ENCODE measurements at regions of chr5 and their contacts with region 1.

Region 1: DNA sequence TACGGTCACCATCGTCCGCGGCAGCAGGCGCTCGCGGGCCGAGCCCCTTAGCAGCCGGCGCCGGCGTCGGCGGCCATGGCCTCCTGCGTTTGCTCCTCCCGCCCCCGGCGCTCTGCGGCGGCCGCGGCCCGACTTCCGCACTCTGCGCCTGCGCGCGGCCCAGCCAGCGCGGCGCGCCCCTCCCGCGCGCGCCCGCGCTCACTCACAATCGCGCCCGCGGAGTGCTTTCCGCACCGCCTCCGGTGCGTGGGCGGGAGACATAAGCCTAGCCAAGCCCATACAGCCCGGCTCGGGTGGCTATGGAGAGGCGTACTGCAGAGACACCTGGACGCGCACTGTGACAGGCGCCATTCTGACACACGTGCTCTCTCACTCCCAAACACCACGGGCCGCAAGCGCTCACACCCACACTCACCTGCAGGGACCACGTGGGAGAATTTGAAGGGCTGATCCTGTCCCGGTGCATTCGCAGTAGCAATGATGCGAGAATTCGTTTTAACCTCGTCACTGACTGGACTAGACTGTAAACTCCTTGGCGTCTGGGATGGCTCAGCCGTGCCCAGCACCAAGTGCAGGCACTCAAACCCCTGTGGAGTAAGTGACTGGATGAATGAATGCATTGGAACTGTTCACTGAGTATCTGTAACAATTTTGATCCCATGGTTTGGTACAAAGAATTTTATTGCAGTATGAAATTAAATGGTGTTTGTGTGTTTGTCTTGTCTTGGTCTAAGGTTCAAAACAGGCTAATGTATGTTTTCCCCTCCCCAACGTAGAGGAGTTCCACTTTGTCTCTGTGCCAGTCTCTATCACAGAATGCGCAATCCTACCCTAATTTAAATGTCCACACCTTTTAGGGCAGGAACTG is at the start of gene RNF145:
- DNase-seq: peak; percentile 86
- H3K4me3 Mint-ChIP-seq: peak within 1 kb of the TSS; percentile 91
- H3K27ac Mint-ChIP-seq: peak within 1 kb of the TSS; percentile 97
- H3K4me1 Mint-ChIP-seq: peaks cover 50% of the 10 kb centered on the region
- H3K27me3 Mint-ChIP-seq: peaks cover 7% of the 10 kb centered on the region
- total RNA-seq, gene RNF145: 113 and 124 TPM in 2 replicates

Region 2: GRCh38 chr5:159163027-159163700 is 46.5 kb before region 1 on chr5:
- intact Hi-C with region 1: loop called (anchors 2 kb)
- DNase-seq: no peak
- H3K4me3 Mint-ChIP-seq: no peak overlapping the region
- H3K27ac Mint-ChIP-seq: peak overlapping the region; percentile 42
- H3K4me1 Mint-ChIP-seq: peaks cover 38% of the 10 kb centered on the region
- H3K27me3 Mint-ChIP-seq: no peaks in the 10 kb centered on the region

Region 3: DNA sequence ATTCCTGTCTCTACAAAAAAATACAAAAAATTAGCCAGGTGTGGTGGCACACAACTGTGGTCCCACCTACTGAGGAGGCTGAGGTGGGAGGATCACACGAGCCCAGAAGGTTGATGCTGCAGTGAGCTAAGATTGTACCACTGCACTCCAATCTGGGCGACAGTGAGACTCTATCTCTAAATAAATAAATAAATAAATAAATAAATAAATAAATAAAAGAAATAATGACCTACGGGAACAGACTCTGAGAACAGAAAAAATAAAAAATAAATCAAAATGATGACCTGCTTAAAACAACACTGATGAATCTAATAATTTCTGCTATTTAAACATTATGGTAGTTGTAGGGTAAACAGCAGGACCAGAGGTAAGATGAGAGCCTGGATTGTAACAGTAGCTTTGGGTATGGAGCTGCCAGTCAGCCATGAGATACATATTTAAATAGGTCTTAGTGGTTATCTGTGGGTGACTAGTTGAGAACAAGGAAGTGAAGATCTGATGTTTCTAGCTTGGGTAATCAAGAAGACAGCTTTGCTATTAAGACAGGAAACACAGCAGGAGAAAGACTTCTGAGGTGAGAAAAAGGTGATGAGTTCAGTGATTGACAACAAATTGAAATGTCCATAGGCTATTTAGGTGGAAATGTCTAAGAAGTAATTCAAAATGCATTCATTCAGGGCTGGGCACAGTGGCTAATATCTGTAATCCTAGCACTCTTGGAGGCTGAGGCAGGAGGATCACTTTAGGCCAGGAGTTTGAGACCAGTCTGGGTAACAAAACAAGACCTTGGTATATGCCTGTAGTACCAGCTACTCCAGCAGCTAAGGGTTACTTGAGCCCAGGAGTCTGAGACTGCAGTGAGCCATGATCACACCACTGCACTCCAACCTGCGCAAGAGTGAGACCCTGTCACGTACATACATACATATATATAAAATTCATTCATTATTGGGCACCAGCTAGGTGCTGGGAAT is 11.3 kb before region 1 on chr5:
- intact Hi-C with region 1: loop called (anchors 1 kb)
- DNase-seq: no peak
- H3K4me3 Mint-ChIP-seq: peak overlapping the region; percentile 24
- H3K27ac Mint-ChIP-seq: peak overlapping the region; percentile 78
- H3K4me1 Mint-ChIP-seq: peaks cover 54% of the 10 kb centered on the region
- H3K27me3 Mint-ChIP-seq: no peaks in the 10 kb centered on the region

Region 4: GRCh38 chr5:159262859-159263567 is 53.3 kb after region 1 on chr5 and contains the start of gene UBLCP1:
- intact Hi-C with region 1: loop called (anchors 1 kb)
- DNase-seq: peak; percentile 76
- H3K4me3 Mint-ChIP-seq: peak within 1 kb of the TSS; percentile 96
- H3K27ac Mint-ChIP-seq: peak within 1 kb of the TSS; percentile 96
- H3K4me1 Mint-ChIP-seq: peaks cover 25% of the 10 kb centered on the region
- H3K27me3 Mint-ChIP-seq: peaks cover 6% of the 10 kb centered on the region
- total RNA-seq, gene UBLCP1: 25.2 and 26.7 TPM in 2 replicates

Region 5: GRCh38 chr5:159773062-159773924 is 563.6 kb after region 1 on chr5:
- intact Hi-C with region 1: loop called (anchors 5 kb)
- DNase-seq: peak; percentile 79
- H3K4me3 Mint-ChIP-seq: peak overlapping the region; percentile 26
- H3K27ac Mint-ChIP-seq: peak overlapping the region; percentile 42
- H3K4me1 Mint-ChIP-seq: peaks cover 38% of the 10 kb centered on the region
- H3K27me3 Mint-ChIP-seq: peaks cover 13% of the 10 kb centered on the region

Measured in activated T-helper 2 cell treated with anti-CD3 and anti-CD28 coated beads, Interferon-gamma antibody, Interleukin-2, Interleukin-4, amounts not matched to agents 10 μg/mL and 5 μg/mL and 100 μg/mL, durations not matched to agents 14 hours and 24 hours and 36 hours (primary cell).